ENCODE measurements at regions of chr17 and their contacts with region 1.

Region 1: GRCh38 chr17:1267471-1267947 is 2.7 kb upstream of the BHLHA9 start:
- DNase-seq: peak in 1 of 2 donors; percentile 38
- H3K4me3 ChIP-seq: peak overlapping the region; percentile 60 to 79 (median 72)
- H3K27ac ChIP-seq: peak overlapping the region; percentile 89 to 92
- H3K4me1 ChIP-seq: peaks cover 5 to 9% of the 10 kb centered on the region in 2 donors
- H3K27me3 ChIP-seq: peaks cover 0 to 23% of the 10 kb centered on the region in 2 donors
- CTCF ChIP-seq: no peak
- POLR2A ChIP-seq: no peak

Region 2: GRCh38 chr17:1251866-1252608 is 15.5 kb before region 1 on chr17:
- intact Hi-C with region 1: no loop called
- DNase-seq: no peak
- H3K4me3 ChIP-seq: no peak overlapping the region
- H3K27ac ChIP-seq: no peak overlapping the region
- H3K4me1 ChIP-seq: no peaks in the 10 kb centered on the region
- H3K27me3 ChIP-seq: no peaks in the 10 kb centered on the region
- CTCF ChIP-seq: no peak
- POLR2A ChIP-seq: no peak

Region 3: DNA sequence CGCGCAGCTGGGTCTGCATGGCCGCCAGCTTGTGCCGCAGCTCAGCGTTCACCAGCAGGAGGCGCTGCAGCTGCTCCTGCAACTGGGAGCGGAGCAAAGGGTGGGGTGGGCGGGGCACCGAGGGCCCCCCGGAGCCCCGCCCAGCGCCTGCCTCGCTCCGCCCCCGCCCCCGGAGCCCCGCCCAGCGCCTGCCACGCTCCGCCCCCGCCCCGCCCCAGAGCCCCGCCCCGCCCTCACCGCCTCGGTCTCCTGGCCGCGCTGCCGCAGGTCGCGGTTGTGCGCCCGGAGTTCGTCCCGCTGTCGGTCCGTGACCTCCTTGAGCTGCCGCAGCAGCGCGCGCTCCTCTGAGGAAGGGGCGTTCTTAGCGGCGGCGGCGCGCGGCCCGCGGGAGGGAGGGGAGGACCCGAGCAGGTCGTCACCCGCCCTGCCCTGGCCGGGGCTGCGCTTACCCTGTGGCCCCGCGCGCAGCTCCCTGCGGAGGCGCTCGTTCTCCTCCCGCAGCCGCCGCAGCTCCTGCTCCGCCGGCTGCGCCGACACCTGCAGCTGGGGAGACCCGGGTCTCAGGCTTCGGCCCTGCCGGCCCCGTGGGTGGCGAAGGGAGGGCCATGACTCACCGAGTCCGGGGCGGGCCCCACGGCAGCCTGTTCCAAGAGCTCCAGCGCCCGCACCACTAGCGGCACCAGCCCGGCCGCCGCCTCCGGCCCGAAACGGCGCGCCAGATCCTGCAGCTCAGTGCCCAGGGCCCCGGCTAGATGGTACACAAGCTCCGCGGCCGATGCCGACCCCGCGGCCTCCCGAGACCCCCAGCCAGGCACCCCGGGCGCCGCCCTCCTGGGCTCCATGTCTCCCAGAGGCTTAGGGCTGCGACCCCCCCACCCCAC is 381.7 kb after region 1 on chr17:
- intact Hi-C with region 1: loop called (anchors 10 kb)
- DNase-seq: peak; percentile 93
- H3K4me3 ChIP-seq: peak overlapping the region; percentile 73 to 80 (median 75)
- H3K27ac ChIP-seq: peak overlapping the region; percentile 91 to 92
- H3K4me1 ChIP-seq: peaks cover 0 to 6% of the 10 kb centered on the region in 2 donors
- H3K27me3 ChIP-seq: no peaks in the 10 kb centered on the region
- CTCF ChIP-seq: no peak
- POLR2A ChIP-seq: no peak